Mammary epithelial cell (primary cell): ENCODE measurements at regions of chr21 and their contacts with region 1.

Region 1: DNA sequence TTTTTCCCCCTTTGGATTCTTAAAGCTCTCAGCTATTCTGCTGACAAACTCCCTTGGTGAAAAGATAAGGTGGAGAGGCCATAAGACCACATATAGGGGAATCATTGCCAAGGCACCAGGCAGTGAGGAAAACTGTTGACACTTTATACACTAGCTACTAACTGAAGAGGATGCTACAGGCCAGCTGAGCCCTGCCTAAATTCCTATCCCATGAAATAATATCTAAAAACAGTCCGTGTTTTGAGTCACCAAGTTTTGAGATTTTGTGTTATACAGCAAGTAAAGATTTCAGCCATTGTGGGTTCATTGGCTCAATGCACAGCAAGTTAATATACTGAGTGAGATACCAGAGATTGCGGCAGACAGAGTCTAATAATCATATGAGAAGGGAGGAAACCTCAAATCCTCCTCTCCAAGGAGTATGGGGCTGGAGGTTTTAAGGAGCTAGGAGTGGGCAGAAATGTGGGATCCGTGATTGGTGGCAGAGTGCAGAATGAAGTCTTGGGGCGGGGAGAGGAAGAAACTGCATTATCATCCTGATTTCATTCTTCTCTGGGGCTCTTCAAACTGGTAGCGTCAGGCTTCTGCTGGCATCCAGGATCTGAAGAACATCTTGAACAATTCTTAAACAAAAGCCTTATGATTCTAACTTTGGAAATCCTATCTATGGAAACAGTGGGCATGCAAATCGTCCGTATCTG is 9.2 kb downstream of the CLDN8 start:
- DNase-seq: peak; percentile 67
- H3K4me3 ChIP-seq: no peak overlapping the region
- H3K27ac ChIP-seq: peak overlapping the region; percentile 60
- H3K4me1 ChIP-seq: peaks cover 11% of the 10 kb centered on the region
- H3K27me3 ChIP-seq: no peaks in the 10 kb centered on the region
- CTCF ChIP-seq: no peak

Region 2: DNA sequence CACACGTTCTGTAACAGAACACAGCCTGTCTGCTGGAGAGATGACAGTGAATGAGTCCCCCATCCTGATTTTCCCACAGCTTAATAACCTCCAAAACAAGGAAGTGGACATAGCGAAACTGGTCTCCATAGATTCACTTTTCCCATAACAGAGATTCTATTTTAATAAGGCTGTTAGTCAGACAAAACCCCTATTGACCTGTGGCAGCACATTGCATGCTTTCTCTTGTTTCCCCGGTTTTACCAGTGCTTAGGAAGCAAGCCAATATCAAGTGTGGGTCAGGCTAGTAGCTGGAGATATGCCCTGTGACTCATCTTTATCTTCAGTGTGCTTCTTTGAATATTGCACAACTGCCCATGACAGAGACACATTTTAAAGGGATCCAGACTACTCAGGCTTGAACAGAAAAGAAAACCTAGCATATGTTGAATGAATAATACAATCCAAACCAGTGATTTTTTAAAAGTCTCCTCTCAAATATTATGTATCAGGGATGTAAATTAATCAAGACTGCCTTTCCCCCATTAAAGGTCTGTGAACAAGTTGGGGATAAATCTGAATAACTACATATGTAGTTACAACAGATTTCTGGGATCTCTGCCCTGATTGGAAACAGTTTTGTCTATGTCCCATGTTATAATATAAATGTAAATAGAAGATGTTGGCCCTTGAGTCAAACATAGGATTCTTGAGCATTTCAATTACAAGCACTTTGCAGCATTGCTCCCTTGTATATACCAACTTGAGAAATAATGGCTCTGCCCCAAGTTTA is 21.1 kb after region 1 on chr21:
- CTCF ChIA-PET with region 1: no interaction called
- dilution Hi-C with region 1: no loop called
- in situ Hi-C with region 1: no loop called
- intact Hi-C with region 1: loop called (anchors 1 kb)
- DNase-seq: peak; percentile 100
- H3K4me3 ChIP-seq: peak overlapping the region in 2 of 3 experiments; percentile 8 to 17
- H3K27ac ChIP-seq: peak overlapping the region; percentile 94
- H3K4me1 ChIP-seq: peaks cover 18% of the 10 kb centered on the region
- H3K27me3 ChIP-seq: no peaks in the 10 kb centered on the region
- CTCF ChIP-seq: no peak

Region 3: GRCh38 chr21:30257773-30258172 is 51.1 kb after region 1 on chr21:
- CTCF ChIA-PET with region 1: interaction called, 3 read pairs
- dilution Hi-C with region 1: no loop called
- in situ Hi-C with region 1: no loop called
- intact Hi-C with region 1: loop called (anchors 2 kb)
- DNase-seq: peak; percentile 66
- H3K4me3 ChIP-seq: no peak overlapping the region
- H3K27ac ChIP-seq: no peak overlapping the region
- H3K4me1 ChIP-seq: no peaks in the 10 kb centered on the region
- H3K27me3 ChIP-seq: no peaks in the 10 kb centered on the region
- CTCF ChIP-seq: peak; percentile 55 to 64

Region 4: DNA sequence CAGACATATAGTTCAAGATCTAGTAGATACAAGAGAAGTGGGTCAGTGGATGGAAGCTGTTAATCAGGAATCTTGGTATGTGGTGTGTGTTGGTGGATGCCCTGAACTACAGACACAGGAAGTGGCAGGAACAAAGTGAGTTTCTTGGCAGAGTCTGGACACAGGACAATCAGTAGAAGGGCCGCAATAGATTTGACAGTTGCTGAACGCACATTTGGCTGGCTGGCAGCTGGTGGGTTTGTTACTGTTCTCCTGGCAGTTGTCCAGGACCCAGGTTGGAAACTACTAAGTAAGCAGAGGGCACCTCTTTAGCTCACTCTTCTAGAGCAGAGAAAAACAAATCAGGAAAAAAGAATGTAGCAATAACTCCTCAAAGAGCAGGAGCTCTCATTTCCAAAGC is 100.2 kb after region 1 on chr21:
- CTCF ChIA-PET with region 1: no interaction called
- dilution Hi-C with region 1: no loop called
- in situ Hi-C with region 1: no loop called
- intact Hi-C with region 1: no loop called
- DNase-seq: no peak
- H3K4me3 ChIP-seq: no peak overlapping the region
- H3K27ac ChIP-seq: no peak overlapping the region
- H3K4me1 ChIP-seq: no peaks in the 10 kb centered on the region
- H3K27me3 ChIP-seq: no peaks in the 10 kb centered on the region
- CTCF ChIP-seq: no peak